CD4-positive, alpha-beta T cell (primary cell): ENCODE measurements at regions of chr4 and their contacts with region 1.

Region 1: GRCh38 chr4:128060699-128061565 is at the start of gene LARP1B:
- DNase-seq: peak; percentile 81 to 96 (median 90)
- ATAC-seq: peak; percentile 89
- H3K4me3 ChIP-seq: peak within 1 kb of the TSS; percentile 64
- H3K4me3 Mint-ChIP-seq: peak within 1 kb of the TSS; percentile 93
- H3K27ac ChIP-seq: peak within 1 kb of the TSS; percentile 60 to 70
- H3K27ac Mint-ChIP-seq: peak within 1 kb of the TSS; percentile 89
- H3K4me1 ChIP-seq: peaks cover 23% of the 10 kb centered on the region
- H3K4me1 Mint-ChIP-seq: peaks cover 6% of the 10 kb centered on the region
- H3K27me3 ChIP-seq: no peaks in the 10 kb centered on the region
- H3K27me3 Mint-ChIP-seq: no peaks in the 10 kb centered on the region
- CTCF ChIP-seq: no peak
- total RNA-seq, gene LARP1B: 8.4 to 8.9 TPM

Region 2: DNA sequence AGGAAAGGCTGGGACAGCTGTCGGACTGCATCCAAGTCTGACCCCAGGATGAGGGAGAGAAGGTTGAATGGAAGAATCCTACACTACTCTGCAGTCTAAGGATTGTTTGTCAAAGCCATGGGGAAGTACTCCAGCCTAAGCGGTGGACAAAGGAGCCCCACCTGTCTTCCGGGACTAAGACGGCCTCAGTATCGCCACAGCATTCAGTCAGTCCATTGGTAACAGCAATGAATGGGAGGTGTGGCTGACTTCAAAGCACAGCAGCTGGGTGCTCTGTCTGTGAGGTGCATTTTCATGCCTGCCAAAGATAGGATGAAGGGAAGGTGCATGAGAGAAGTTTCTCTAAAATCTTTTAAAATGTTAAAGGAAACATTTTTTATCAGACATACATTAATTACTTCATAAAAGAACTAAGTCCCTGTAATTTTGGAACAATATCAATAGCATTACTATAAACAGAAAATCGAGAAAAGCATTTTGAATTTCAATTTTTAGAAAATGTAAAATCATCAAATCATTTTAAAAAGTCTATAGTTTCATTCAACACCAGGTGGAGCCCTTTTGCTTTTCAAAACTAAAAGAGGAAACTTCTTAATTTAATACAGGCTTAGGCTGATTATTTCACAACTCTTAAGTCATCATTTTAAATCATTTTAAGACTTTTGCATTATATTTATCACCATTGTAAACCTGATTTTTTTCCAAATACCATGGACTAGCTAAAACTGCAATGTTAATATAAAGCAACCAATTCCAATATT is 455.8 kb before region 1 on chr4:
- CTCF ChIA-PET with region 1: no interaction called
- POLR2A ChIA-PET with region 1: no interaction called
- intact Hi-C with region 1: loop called in 1 of 2 experiments (anchors 10 kb)
- DNase-seq: peak in 1 of 14 experiments; percentile 17
- ATAC-seq: no peak
- H3K4me3 ChIP-seq: no peak overlapping the region
- H3K4me3 Mint-ChIP-seq: no peak overlapping the region
- H3K27ac ChIP-seq: no peak overlapping the region
- H3K27ac Mint-ChIP-seq: no peak overlapping the region
- H3K4me1 ChIP-seq: no peaks in the 10 kb centered on the region
- H3K4me1 Mint-ChIP-seq: no peaks in the 10 kb centered on the region
- H3K27me3 ChIP-seq: no peaks in the 10 kb centered on the region
- H3K27me3 Mint-ChIP-seq: peaks cover 17% of the 10 kb centered on the region
- CTCF ChIP-seq: peak; percentile 9

Region 3: GRCh38 chr4:127880764-127881562 is 180.0 kb before region 1 on chr4 and contains the start of gene PLK4:
- CTCF ChIA-PET with region 1: no interaction called
- POLR2A ChIA-PET with region 1: interaction called, 16 read pairs
- intact Hi-C with region 1: loop called in 1 of 2 experiments (anchors 2 kb)
- DNase-seq: peak; percentile 86 to 97 (median 92)
- ATAC-seq: peak; percentile 89
- H3K4me3 ChIP-seq: peak within 1 kb of the TSS; percentile 80
- H3K4me3 Mint-ChIP-seq: peak within 1 kb of the TSS; percentile 95
- H3K27ac ChIP-seq: peak within 1 kb of the TSS; percentile 73 to 76
- H3K27ac Mint-ChIP-seq: peak within 1 kb of the TSS; percentile 99
- H3K4me1 ChIP-seq: peaks cover 11% of the 10 kb centered on the region
- H3K4me1 Mint-ChIP-seq: peaks cover 29% of the 10 kb centered on the region
- H3K27me3 ChIP-seq: no peaks in the 10 kb centered on the region
- H3K27me3 Mint-ChIP-seq: no peaks in the 10 kb centered on the region
- CTCF ChIP-seq: no peak
- total RNA-seq, gene PLK4: 2.7 to 3.4 TPM